Psoas muscle (tissue), 8 donors: ENCODE measurements at regions of chr5 and their contacts with region 1.

Region 1: DNA sequence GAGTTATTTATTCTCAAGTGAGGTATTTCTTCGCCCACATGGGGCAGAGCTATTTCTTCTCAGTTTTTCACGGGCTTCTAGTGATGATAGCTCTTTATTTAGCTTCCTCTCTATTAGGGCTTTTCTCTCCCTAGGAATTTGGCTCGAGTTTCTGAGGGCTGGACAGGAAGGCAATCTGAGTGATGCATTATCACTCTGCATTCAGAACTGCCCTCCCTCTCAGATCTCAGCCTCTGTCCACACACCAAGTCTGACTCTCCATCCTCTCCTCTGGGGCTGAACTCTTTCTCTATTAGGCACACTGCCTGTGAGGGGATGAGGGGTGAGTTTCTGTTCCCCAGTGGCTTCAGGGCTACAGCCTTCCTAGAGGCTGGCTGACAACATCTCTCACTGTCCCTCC is 14.9 kb upstream of the SCAMP1 start:
- DNase-seq: no peak
- ATAC-seq: no peak
- H3K4me3 ChIP-seq: no peak overlapping the region
- H3K27ac ChIP-seq: no peak overlapping the region
- H3K4me1 ChIP-seq: no peaks in the 10 kb centered on the region
- H3K27me3 ChIP-seq: no peaks in the 10 kb centered on the region
- CTCF ChIP-seq: no peak

Region 2: GRCh38 chr5:78430866-78431265 is 85.4 kb after region 1 on chr5:
- intact Hi-C with region 1: no loop called
- DNase-seq: no peak
- ATAC-seq: no peak
- H3K4me3 ChIP-seq: no peak overlapping the region
- H3K27ac ChIP-seq: no peak overlapping the region
- H3K4me1 ChIP-seq: no peaks in the 10 kb centered on the region
- H3K27me3 ChIP-seq: no peaks in the 10 kb centered on the region
- CTCF ChIP-seq: no peak

Region 3: GRCh38 chr5:79588696-79589095 is 1243.2 kb after region 1 on chr5:
- intact Hi-C with region 1: loop called in 1 of 2 experiments (anchors 5 kb)
- DNase-seq: no peak
- ATAC-seq: peak in 2 of 4 donors; percentile 39 to 49
- H3K4me3 ChIP-seq: no peak overlapping the region
- H3K27ac ChIP-seq: no peak overlapping the region
- H3K4me1 ChIP-seq: no peaks in the 10 kb centered on the region
- H3K27me3 ChIP-seq: no peaks in the 10 kb centered on the region
- CTCF ChIP-seq: no peak